Activated CD8-positive, alpha-beta T cell treated with anti-CD3 and anti-CD28 coated beads for 36 hours (primary cell): ENCODE measurements at regions of chr16 and their contacts with region 1.

Region 1: GRCh38 chr16:21708533-21709115 is 44.9 kb downstream of the OTOA start:
- DNase-seq: peak; percentile 94
- ATAC-seq: peak; percentile 45
- H3K4me3 Mint-ChIP-seq: no peak overlapping the region
- H3K27ac Mint-ChIP-seq: no peak overlapping the region
- H3K4me1 Mint-ChIP-seq: peaks cover 2% of the 10 kb centered on the region
- H3K27me3 Mint-ChIP-seq: no peaks in the 10 kb centered on the region
- CTCF ChIP-seq: peak; percentile 88

Region 2: DNA sequence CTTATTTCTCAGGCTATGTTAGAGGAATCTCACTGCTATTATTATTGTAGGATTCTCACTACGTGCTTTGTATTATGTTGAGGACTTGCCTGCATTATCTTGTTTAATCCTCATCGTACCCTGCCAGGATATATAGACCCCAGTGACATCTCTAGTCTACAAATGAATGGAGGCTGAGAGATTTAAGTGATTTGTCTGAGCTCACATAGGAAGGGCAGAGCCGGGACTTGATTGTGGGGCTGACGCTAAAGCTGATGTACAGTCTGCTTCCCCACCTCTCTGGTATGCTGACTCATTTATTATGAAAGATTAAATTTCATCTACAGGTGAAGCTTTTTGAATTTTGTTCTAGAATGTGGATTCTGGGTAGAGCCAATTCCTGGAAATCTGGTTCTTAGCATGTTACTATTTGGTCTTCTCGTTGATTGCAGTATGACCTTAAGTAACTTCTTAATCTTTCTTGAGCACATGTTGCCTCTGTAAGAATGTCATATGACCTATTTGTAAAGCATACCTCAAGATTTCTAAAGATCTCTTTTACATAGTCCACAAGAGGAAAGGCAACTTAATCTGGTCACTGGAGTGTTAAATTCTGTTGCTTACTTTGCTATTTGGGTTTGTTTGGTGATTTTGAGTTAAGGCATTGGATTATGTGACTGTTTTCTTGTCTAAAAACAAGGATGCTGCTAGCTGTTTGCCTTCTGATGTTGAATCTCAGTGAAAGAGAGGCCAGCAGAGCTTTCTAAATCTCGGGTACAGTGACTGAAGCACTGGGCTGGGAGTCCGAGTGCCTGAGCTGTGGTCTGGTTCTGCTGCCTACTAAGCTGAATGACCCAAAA is 96.9 kb before region 1 on chr16:
- CTCF ChIA-PET with region 1: interaction called, 11 read pairs
- POLR2A ChIA-PET with region 1: no interaction called
- intact Hi-C with region 1: no loop called
- DNase-seq: peak; percentile 57
- ATAC-seq: peak; percentile 85
- H3K4me3 Mint-ChIP-seq: peak overlapping the region; percentile 34
- H3K27ac Mint-ChIP-seq: peak overlapping the region; percentile 90
- H3K4me1 Mint-ChIP-seq: peaks cover 91% of the 10 kb centered on the region
- H3K27me3 Mint-ChIP-seq: no peaks in the 10 kb centered on the region
- CTCF ChIP-seq: no peak

Region 3: DNA sequence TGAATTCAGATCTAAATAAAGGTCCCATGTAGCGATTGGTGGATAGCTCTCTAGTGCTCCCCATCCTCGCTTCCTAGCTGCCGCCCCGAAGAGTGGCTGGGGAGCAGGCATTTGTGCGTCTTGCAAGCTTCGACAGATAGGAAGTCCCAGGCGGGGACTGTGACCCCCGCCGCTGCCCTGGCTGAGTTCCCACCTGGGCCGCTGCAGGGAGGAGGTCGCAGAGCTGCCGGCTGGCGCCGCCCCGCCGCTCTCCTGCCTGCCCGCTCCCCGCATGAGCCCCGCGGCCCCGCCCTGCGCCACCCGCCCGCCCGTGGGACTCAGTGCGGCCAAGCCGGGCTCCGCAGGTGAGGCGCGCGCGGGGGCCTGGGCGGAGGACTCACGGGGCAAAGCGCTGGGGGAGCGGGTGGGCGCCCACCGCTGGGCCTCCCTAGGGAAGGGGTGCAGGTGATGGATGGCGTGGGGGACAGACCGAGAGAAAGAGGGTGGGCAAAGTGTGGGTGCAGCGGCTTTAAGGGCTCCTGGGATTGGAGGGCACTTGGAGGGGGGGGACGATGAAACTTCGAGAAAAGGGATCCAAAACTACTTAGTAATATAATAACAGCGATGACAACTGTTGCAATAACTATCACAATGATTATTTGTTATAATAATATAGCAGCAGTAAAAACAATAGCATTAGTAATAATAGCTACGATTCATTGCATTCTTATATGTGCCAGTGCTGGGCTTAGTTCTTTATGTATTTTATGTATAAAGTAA is 44.6 kb before region 1 on chr16 and contains the start of gene OTOA:
- CTCF ChIA-PET with region 1: interaction called, 14 read pairs
- POLR2A ChIA-PET with region 1: interaction called, 4 read pairs
- intact Hi-C with region 1: loop called (anchors 5 kb)
- DNase-seq: peak; percentile 39
- ATAC-seq: peak; percentile 70
- H3K4me3 Mint-ChIP-seq: peak within 1 kb of the TSS; percentile 59
- H3K27ac Mint-ChIP-seq: no peak within 1 kb of the TSS
- H3K4me1 Mint-ChIP-seq: peaks cover 15% of the 10 kb centered on the region
- H3K27me3 Mint-ChIP-seq: peaks cover 6% of the 10 kb centered on the region
- CTCF ChIP-seq: no peak
- total RNA-seq, gene OTOA: 0.09 TPM in 1 of 2 experiments, not detected in the other

Region 4: DNA sequence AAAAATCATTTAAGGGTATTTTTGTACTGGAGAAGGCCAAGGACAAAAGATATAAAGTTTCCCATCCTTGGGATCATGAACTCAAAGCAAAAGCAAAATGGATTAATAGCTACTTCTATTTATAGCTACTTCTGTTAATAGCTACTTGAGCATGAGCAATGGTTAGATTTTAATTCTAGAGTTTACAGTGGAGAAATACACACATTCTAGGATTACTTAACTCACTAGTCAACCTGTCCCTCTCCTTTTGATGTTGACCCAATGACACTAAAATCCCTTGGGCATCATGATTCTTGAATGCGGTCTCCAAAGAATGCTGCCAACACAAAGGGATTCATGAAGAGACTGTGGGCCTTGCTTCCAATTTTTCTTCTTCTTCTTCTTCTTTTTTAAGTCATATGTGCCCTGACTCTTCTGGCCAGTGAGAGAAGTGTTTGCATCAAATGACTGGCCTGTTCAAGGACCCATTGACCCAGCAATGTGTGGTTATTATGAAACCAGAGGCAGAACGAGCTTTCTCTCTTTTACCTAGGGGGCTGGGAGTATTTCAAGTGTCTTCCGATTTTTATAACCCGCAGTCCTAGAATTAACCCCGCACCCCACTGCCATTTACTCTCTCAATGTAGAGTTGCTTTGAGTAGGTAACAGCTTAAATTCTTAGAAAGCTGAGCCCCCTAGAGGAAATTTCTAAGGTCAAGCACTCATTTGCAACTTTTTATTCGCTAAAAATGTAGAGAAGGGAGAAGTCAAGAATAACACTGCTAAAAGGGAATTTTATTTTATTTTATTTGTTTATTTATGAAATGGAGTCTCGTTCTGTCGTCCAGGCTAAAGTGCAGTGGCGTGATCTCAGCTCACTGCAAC is 10.2 kb before region 1 on chr16:
- CTCF ChIA-PET with region 1: interaction called, 13 read pairs
- POLR2A ChIA-PET with region 1: interaction called, 3 read pairs
- intact Hi-C with region 1: no loop called
- DNase-seq: no peak
- ATAC-seq: no peak
- H3K4me3 Mint-ChIP-seq: no peak overlapping the region
- H3K27ac Mint-ChIP-seq: no peak overlapping the region
- H3K4me1 Mint-ChIP-seq: no peaks in the 10 kb centered on the region
- H3K27me3 Mint-ChIP-seq: no peaks in the 10 kb centered on the region
- CTCF ChIP-seq: no peak